H1 (cell line): ENCODE measurements at regions of chr20 and their contacts with region 1.

Region 1: DNA sequence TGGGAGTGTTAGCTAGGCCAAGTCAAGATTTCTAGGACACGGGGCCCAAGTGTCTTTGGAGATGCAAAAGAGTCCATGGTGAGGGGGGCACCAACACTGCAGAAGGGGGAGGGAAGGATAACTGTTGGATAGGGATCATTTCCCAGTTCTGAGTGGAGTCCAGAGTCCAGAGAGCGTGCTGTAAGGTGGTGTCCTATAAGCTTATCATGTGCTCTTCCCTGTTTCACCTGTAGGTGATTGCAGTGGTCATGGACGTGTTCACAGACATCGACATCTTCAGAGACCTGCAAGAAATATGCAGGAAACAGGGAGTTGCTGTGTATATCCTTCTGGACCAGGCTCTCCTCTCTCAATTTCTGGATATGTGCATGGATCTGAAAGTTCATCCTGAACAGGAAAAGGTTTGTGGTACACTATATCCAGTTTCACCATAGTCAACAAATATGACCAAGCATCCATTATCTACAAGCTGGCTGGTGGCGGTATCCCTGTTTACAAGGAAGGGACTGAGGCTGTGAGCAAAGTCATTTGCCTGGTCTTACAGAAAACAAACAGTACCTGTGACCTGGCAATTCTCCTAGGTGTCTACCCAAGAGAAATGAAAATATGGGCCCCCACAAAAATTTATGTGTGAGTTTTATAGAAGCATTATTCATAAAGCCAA is 15.6 kb downstream of the FAM83D start:
- DNase-seq: no peak
- H3K4me3 ChIP-seq: no peak overlapping the region
- H3K27ac ChIP-seq: no peak overlapping the region
- H3K4me1 ChIP-seq: peaks cover 0 to 6% (median 0%) of the 10 kb centered on the region in 4 experiments; a peak in 2 of 7 replicates
- H3K27me3 ChIP-seq: no peaks in the 10 kb centered on the region
- CTCF ChIP-seq: peak in 1 of 3 experiments; percentile 27; a peak in 1 of 4 replicates
- EP300 ChIP-seq: no peak
- POLR2A ChIP-seq: no peak
- RAD21 ChIP-seq: no peak

Region 2: DNA sequence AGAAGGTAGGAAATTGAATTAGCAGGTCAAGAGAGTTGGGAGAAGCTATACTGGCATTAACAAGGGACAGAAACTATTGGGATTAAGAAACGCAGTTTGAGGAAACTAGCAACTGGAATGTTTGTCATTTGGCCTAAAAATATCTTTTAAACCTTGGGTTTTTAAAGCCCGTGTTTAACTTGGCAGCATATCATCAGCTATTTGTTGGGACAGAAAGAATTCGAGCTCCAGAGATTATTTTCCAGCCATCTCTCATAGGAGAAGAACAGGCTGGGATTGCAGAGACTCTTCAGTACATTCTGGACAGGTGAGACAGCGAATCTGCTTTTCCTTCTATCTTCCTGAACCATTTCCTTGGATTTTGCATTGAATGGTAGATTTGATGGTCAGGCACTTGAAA is 175.8 kb before region 1 on chr20:
- CTCF ChIA-PET with region 1: no interaction called
- POLR2A ChIA-PET with region 1: no interaction called
- DNase-seq: no peak
- H3K4me3 ChIP-seq: no peak overlapping the region
- H3K27ac ChIP-seq: no peak overlapping the region
- H3K4me1 ChIP-seq: 0 out of 7 replicates have a peak, but pooled peaks cover 0 to 2% (median 0%) of the 10 kb centered on the region in 4 experiments
- H3K27me3 ChIP-seq: no peaks in the 10 kb centered on the region
- CTCF ChIP-seq: no peak
- EP300 ChIP-seq: no peak
- POLR2A ChIP-seq: no peak
- RAD21 ChIP-seq: no peak

Region 3: GRCh38 chr20:38926142-38926933 is 15.5 kb before region 1 on chr20 and contains the start of gene FAM83D:
- CTCF ChIA-PET with region 1: interaction called, 10 read pairs
- POLR2A ChIA-PET with region 1: interaction called, 57 read pairs
- DNase-seq: peak; percentile 99
- H3K4me3 ChIP-seq: peak within 1 kb of the TSS; percentile 85 to 90 (median 87)
- H3K27ac ChIP-seq: peak within 1 kb of the TSS; percentile 73; the same call in 1 of the 2 replicates
- H3K4me1 ChIP-seq: peaks cover 6 to 8% (median 6%) of the 10 kb centered on the region in 4 experiments
- H3K27me3 ChIP-seq: no peaks in the 10 kb centered on the region
- CTCF ChIP-seq: no peak
- EP300 ChIP-seq: no peak
- POLR2A ChIP-seq: peak; percentile 99
- RAD21 ChIP-seq: no peak; a peak in 1 of 4 replicates
- total RNA-seq, gene FAM83D: 61.4 and 62.6 TPM in 2 replicates